ENCODE measurements at regions of chr17 and their contacts with region 1.

Region 1: DNA sequence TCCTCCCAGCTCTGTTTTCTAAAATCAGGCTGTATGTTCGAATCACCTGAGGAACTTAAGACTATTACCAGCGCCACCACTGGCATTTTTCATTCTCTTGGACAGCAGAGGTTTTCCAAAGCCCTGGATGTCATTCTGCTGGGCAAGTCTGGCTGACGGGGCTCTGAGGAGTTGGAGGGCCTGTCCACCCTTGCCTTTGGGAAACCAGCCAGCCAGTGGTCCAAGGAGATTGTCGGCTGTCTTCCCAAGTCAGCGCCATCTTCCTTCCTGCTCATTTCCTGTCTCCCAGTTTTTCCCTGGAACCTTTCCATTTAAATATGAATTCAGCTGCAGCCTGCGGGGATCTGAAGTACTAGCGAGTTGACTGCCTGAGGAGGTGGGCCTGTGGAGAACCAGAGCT is 258.3 kb downstream of the PRKCA start:
- DNase-seq: no peak
- ATAC-seq: no peak
- H3K4me3 Mint-ChIP-seq: no peak overlapping the region
- H3K27ac Mint-ChIP-seq: no peak overlapping the region
- H3K4me1 Mint-ChIP-seq: peaks cover 42% of the 10 kb centered on the region
- H3K27me3 Mint-ChIP-seq: no peaks in the 10 kb centered on the region

Region 2: GRCh38 chr17:66533572-66533971 is 27.1 kb before region 1 on chr17:
- CTCF ChIA-PET with region 1: no interaction called
- POLR2A ChIA-PET with region 1: no interaction called
- intact Hi-C with region 1: loop called in 1 of 2 experiments (anchors 2 kb)
- DNase-seq: no peak
- ATAC-seq: no peak
- H3K4me3 Mint-ChIP-seq: no peak overlapping the region
- H3K27ac Mint-ChIP-seq: no peak overlapping the region
- H3K4me1 Mint-ChIP-seq: peaks cover 52% of the 10 kb centered on the region
- H3K27me3 Mint-ChIP-seq: no peaks in the 10 kb centered on the region